Heart left ventricle (tissue), 16 donors: ENCODE measurements at regions of chr6 and their contacts with region 1.

Region 1: GRCh38 chr6:46903175-46903574 is 18.6 kb downstream of the ADGRF5 start:
- DNase-seq: peak in 4 of 5 donors; percentile 53 to 68 (median 58)
- ATAC-seq: peak; percentile 66 to 91 (median 76)
- H3K4me3 ChIP-seq: peak overlapping the region in 1 of 12 donors; percentile 1
- H3K27ac ChIP-seq: peak overlapping the region in 11 of 12 donors; percentile 27 to 74 (median 59)
- H3K4me1 ChIP-seq: peaks cover 0 to 82% (median 36%) of the 10 kb centered on the region in 12 donors
- H3K27me3 ChIP-seq: no peaks in the 10 kb centered on the region
- CTCF ChIP-seq: peak in 2 of 12 donors; percentile 21 to 34
- POLR2A ChIP-seq: no peak

Region 2: GRCh38 chr6:46848684-46849360 is 54.4 kb before region 1 on chr6:
- intact Hi-C with region 1: loop called in 2 of 10 experiments (anchors 5 to 10 kb)
- DNase-seq: peak; percentile 84 to 94 (median 87)
- ATAC-seq: peak; percentile 65 to 96 (median 95)
- H3K4me3 ChIP-seq: peak overlapping the region in 5 of 12 donors; percentile 3 to 32 (median 26)
- H3K27ac ChIP-seq: no peak overlapping the region
- H3K4me1 ChIP-seq: peaks cover 0 to 44% (median 13%) of the 10 kb centered on the region in 12 donors
- H3K27me3 ChIP-seq: no peaks in the 10 kb centered on the region
- CTCF ChIP-seq: peak; percentile 93 to 99 (median 98)
- POLR2A ChIP-seq: no peak

Region 3: DNA sequence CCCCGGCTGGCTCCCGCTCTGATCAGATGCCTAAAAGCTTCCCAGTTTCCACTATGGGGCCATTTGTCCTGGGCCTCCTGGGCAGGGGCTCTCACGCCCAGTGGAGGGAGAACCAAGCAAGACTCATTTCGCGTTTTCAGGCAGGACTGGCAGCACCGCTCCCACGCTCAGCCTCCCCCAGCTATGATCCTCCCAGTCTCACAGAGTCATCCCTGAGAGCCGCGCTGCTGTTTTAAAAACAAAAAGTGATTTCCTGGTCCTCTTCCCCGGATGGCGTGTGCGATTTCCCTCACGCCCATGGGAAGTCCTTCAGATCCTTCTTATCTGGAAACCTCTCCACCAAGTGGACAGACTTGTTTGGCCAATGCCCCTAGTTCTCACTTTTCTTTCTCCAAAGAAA is 18.6 kb after region 1 on chr6 and contains the start of gene ADGRF5:
- intact Hi-C with region 1: loop called in 1 of 10 experiments (anchors 2 kb)
- DNase-seq: peak; percentile 51 to 68 (median 57)
- ATAC-seq: peak; percentile 51 to 78 (median 64)
- H3K4me3 ChIP-seq: peak within 1 kb of the TSS; percentile 24 to 72 (median 53)
- H3K27ac ChIP-seq: peak within 1 kb of the TSS; percentile 70 to 93 (median 88)
- H3K4me1 ChIP-seq: peaks cover 0 to 58% (median 18%) of the 10 kb centered on the region in 12 donors
- H3K27me3 ChIP-seq: no peaks in the 10 kb centered on the region
- CTCF ChIP-seq: no peak
- POLR2A ChIP-seq: peak in 1 of 2 donors; percentile 61
- total RNA-seq, gene ADGRF5: 27.3 to 89.6 (median 47.6) TPM

Region 4: GRCh38 chr6:46949632-46950280 is 46.6 kb after region 1 on chr6:
- intact Hi-C with region 1: loop called in 3 of 10 experiments (anchors 5 to 10 kb)
- DNase-seq: peak; percentile 74 to 90 (median 83)
- ATAC-seq: peak; percentile 79 to 86 (median 82)
- H3K4me3 ChIP-seq: peak overlapping the region in 2 of 12 donors; percentile 17 to 21
- H3K27ac ChIP-seq: peak overlapping the region; percentile 61 to 90 (median 83)
- H3K4me1 ChIP-seq: peaks cover 0 to 61% (median 29%) of the 10 kb centered on the region in 12 donors
- H3K27me3 ChIP-seq: no peaks in the 10 kb centered on the region
- CTCF ChIP-seq: no peak
- POLR2A ChIP-seq: no peak

Region 5: GRCh38 chr6:46954837-46955451 is 51.8 kb after region 1 on chr6:
- intact Hi-C with region 1: loop called in 2 of 10 experiments (anchors 5 to 10 kb)
- DNase-seq: peak in 2 of 5 donors; percentile 33 to 35
- ATAC-seq: peak in 2 of 4 donors; percentile 33 to 38
- H3K4me3 ChIP-seq: peak overlapping the region in 10 of 12 donors; percentile 19 to 54 (median 41)
- H3K27ac ChIP-seq: peak overlapping the region in 10 of 12 donors; percentile 36 to 89 (median 56)
- H3K4me1 ChIP-seq: peaks cover 0 to 31% (median 12%) of the 10 kb centered on the region in 12 donors
- H3K27me3 ChIP-seq: no peaks in the 10 kb centered on the region
- CTCF ChIP-seq: no peak
- POLR2A ChIP-seq: no peak